ENCODE measurements at regions of chr3 and their contacts with region 1.

Region 1: GRCh38 chr3:108662130-108662738 is 72.7 kb downstream of the DZIP3 start:
- DNase-seq: peak; percentile 42 to 65 (median 46)
- ATAC-seq: peak; percentile 70; the same call in 2 of the 3 replicates
- H3K4me3 ChIP-seq: no peak overlapping the region
- H3K27ac ChIP-seq: no peak overlapping the region
- H3K4me1 ChIP-seq: no peaks in the 10 kb centered on the region
- H3K27me3 ChIP-seq: no peaks in the 10 kb centered on the region
- CTCF ChIP-seq: peak; percentile 38 to 71 (median 59); a peak in 5 of 6 replicates
- EP300 ChIP-seq: no peak
- POLR2A ChIP-seq: no peak
- RAD21 ChIP-seq: peak; percentile 78 to 82

Region 2: DNA sequence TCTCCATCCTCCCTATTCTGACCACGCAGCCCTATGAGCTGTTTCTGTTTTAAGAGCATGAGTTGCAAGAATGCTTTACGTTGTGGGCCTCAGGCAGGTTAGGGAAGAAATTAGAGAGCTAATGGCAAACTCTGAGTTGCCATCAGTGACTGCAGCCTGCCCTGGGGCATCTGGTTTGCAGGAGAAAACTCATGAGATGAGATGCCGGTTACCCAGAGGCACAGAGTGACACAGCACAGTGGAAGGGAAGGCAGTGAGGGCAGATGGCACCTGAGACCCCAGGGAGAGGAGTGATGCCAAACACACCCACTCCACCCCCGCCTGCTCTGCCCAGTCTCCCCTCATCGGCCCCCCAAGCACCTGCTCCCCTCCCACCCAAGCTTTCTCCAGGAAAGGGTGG is 836.6 kb before region 1 on chr3:
- CTCF ChIA-PET with region 1: no interaction called
- POLR2A ChIA-PET with region 1: no interaction called
- in situ Hi-C with region 1: no loop called
- intact Hi-C with region 1: no loop called
- DNase-seq: no peak
- ATAC-seq: no peak
- H3K4me3 ChIP-seq: no peak overlapping the region
- H3K27ac ChIP-seq: no peak overlapping the region
- H3K4me1 ChIP-seq: no peaks in the 10 kb centered on the region
- H3K27me3 ChIP-seq: peaks cover 0 to 4% of the 10 kb centered on the region in 2 experiments; a peak in 1 of 5 replicates
- CTCF ChIP-seq: no peak
- EP300 ChIP-seq: no peak
- POLR2A ChIP-seq: no peak
- RAD21 ChIP-seq: no peak

Region 3: GRCh38 chr3:108489771-108490170 is 172.5 kb before region 1 on chr3:
- CTCF ChIA-PET with region 1: no interaction called
- POLR2A ChIA-PET with region 1: no interaction called
- in situ Hi-C with region 1: no loop called
- intact Hi-C with region 1: loop called (anchors 2 kb)
- DNase-seq: peak; percentile 25 to 43 (median 33)
- ATAC-seq: peak; percentile 73
- H3K4me3 ChIP-seq: no peak overlapping the region
- H3K27ac ChIP-seq: no peak overlapping the region
- H3K4me1 ChIP-seq: no peaks in the 10 kb centered on the region; a peak in 1 of 5 replicates
- H3K27me3 ChIP-seq: peaks cover 0 to 7% of the 10 kb centered on the region in 2 experiments; a peak in 2 of 5 replicates
- CTCF ChIP-seq: peak; percentile 59 to 69 (median 62); a peak in 5 of 6 replicates
- EP300 ChIP-seq: no peak
- POLR2A ChIP-seq: no peak
- RAD21 ChIP-seq: peak; percentile 76 to 83

Region 4: DNA sequence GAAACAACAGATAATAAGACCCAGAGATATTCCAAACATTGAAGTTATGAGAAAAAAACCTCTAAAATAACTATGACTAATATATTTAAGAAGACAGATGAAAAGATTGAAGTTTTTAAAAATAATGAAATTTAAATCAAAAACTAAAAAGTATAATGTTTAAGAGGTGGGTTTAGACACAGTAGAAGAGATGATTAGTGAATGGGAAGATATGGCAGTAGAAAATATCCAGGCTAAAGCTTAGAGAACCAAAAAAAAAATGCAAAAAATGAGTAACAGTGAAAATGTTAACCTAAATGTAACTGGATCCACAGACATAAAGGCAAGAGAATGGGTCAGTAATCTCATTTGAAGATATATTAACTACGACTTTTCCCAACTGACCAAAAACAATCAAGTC is 42.8 kb after region 1 on chr3:
- CTCF ChIA-PET with region 1: no interaction called
- POLR2A ChIA-PET with region 1: no interaction called
- in situ Hi-C with region 1: no loop called
- intact Hi-C with region 1: no loop called
- DNase-seq: no peak
- ATAC-seq: no peak
- H3K4me3 ChIP-seq: no peak overlapping the region
- H3K27ac ChIP-seq: no peak overlapping the region
- H3K4me1 ChIP-seq: no peaks in the 10 kb centered on the region
- H3K27me3 ChIP-seq: no peaks in the 10 kb centered on the region
- CTCF ChIP-seq: no peak
- EP300 ChIP-seq: no peak
- POLR2A ChIP-seq: no peak
- RAD21 ChIP-seq: no peak

Region 5: DNA sequence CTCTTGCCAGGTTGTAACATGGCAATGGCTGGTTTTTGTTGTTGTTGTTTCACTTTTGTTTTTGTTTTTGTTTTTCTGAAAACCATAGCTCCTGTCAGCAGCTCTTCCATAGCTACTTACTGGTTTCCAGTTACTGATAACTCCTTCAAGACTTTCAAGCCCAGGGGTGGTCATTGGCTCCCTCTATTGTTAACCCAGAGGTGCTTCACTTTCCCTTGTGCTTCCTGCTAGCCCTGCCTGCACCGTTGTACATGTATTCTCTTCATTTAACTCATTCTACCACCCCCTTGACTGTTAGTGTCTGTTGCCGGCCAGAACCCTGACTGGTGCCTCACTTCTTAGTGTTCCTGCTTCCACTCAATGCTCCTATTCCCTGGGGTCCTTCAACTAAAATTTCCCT is 156.2 kb after region 1 on chr3:
- CTCF ChIA-PET with region 1: interaction called, 3 read pairs
- POLR2A ChIA-PET with region 1: no interaction called
- in situ Hi-C with region 1: no loop called
- intact Hi-C with region 1: loop called (anchors 1 kb)
- DNase-seq: peak in 3 of 4 experiments; percentile 2 to 33 (median 16)
- ATAC-seq: peak; percentile 84
- H3K4me3 ChIP-seq: no peak overlapping the region
- H3K27ac ChIP-seq: no peak overlapping the region
- H3K4me1 ChIP-seq: no peaks in the 10 kb centered on the region
- H3K27me3 ChIP-seq: no peaks in the 10 kb centered on the region
- CTCF ChIP-seq: peak; percentile 42 to 59 (median 50); a peak in 4 of 6 replicates
- EP300 ChIP-seq: no peak
- POLR2A ChIP-seq: no peak
- RAD21 ChIP-seq: peak; percentile 54 to 69

Region 6: DNA sequence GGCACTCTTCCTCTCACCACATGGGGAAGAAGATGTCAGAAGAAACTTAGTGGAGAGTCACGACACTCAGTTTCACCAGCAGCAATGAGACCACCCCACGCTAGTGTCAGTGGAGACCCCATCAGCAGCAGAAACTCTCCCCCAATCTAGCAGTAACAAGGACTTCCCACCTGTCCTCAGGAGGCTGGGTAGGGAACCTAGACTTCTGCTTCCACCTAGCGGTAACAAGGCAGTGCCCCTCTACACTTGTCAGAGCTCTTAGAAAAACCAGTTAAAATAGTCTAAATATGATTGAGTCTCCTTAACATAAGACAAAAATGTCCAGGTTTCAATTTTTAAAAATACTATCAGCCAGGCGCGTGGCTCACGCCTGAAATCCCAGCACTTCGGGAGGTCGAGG is 217.7 kb after region 1 on chr3:
- CTCF ChIA-PET with region 1: no interaction called
- POLR2A ChIA-PET with region 1: no interaction called
- in situ Hi-C with region 1: no loop called
- intact Hi-C with region 1: loop called (anchors 2 kb)
- DNase-seq: peak in 2 of 4 experiments; percentile 12 to 18
- ATAC-seq: peak; percentile 79
- H3K4me3 ChIP-seq: no peak overlapping the region
- H3K27ac ChIP-seq: no peak overlapping the region
- H3K4me1 ChIP-seq: no peaks in the 10 kb centered on the region
- H3K27me3 ChIP-seq: no peaks in the 10 kb centered on the region
- CTCF ChIP-seq: peak; percentile 27 to 39 (median 31); a peak in 2 of 6 replicates
- EP300 ChIP-seq: no peak
- POLR2A ChIP-seq: no peak
- RAD21 ChIP-seq: peak; percentile 32 to 54; a peak in 2 of 4 replicates

Region 7: GRCh38 chr3:108907194-108907593 is 245.0 kb after region 1 on chr3:
- CTCF ChIA-PET with region 1: no interaction called
- POLR2A ChIA-PET with region 1: no interaction called
- in situ Hi-C with region 1: loop called (anchors 10 kb)
- intact Hi-C with region 1: no loop called
- DNase-seq: no peak
- ATAC-seq: no peak
- H3K4me3 ChIP-seq: no peak overlapping the region
- H3K27ac ChIP-seq: no peak overlapping the region
- H3K4me1 ChIP-seq: no peaks in the 10 kb centered on the region
- H3K27me3 ChIP-seq: no peaks in the 10 kb centered on the region
- CTCF ChIP-seq: no peak
- EP300 ChIP-seq: no peak
- POLR2A ChIP-seq: no peak
- RAD21 ChIP-seq: no peak

Region 8: DNA sequence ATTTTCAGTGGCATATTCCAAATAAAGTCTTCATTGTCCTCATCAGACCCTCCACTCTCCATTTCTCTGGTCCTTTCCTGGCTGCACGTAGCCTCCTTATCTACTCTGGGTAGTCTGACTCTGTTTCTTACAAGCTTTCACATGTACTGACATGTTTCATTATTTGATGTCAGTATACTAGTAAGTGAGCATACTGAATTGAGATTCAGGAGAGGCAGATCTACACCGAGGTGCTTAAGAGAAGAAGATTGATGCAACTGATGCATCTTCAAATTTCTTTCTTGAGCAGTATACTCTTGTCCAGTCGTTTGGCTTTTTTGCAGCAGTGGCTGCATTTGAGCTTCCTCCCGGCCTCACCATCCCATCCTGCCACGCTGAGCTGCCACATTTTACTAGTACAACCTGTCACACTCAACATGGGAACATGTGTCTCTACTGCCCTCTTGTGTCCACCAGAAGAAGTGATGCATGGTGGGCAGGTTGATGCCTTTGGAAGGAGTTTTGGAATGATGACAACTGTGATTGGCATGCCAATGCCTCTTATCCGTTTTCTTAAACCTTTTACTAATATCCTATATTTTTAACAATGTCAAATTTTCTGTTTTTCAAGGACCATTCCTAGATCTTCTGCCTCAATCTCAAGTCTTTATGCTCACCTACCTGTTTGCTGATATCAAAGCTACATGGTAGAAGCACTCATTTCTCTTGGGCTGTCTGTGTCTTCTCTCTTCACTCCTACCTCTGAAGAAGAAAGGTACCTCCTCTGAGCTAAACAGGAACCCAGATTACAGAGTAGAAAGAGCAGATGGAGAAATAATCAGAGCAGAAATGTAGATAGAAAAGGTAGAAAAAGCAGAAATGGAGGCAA is 252.8 kb after region 1 on chr3:
- CTCF ChIA-PET with region 1: interaction called, 3 read pairs
- POLR2A ChIA-PET with region 1: no interaction called
- in situ Hi-C with region 1: no loop called
- intact Hi-C with region 1: loop called (anchors 1 kb)
- DNase-seq: peak; percentile 29 to 57 (median 54)
- ATAC-seq: peak; percentile 86
- H3K4me3 ChIP-seq: no peak overlapping the region
- H3K27ac ChIP-seq: no peak overlapping the region
- H3K4me1 ChIP-seq: no peaks in the 10 kb centered on the region
- H3K27me3 ChIP-seq: no peaks in the 10 kb centered on the region
- CTCF ChIP-seq: peak; percentile 57 to 71 (median 63)
- EP300 ChIP-seq: no peak
- POLR2A ChIP-seq: no peak
- RAD21 ChIP-seq: peak; percentile 65 to 73

Region 9: DNA sequence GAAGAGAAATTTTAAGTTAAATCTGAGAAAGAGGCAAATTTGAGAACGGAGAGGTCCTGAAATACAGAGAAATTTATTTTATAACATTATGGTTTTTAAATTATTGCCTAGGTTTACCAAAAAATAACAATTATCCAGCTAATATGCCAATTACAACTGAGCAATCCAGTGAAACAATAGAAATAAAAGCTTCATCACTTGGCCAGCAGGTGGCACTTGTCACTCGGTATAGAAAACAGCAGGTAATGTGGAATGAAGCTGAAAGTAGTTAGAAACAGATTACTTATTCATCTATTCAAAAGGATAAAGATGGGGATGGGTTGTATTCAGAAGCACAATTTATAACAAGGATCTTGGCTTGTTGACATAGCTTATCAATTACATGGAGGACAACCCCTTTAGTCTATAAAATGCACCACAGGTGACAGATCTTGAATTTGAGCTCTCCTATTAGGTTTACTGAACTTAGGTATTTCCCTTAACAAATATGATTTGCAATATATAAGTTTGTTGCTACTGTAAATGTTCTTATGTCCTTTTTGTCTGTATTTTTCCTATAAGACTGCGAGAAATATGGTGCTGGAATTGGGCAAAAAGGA is 361.5 kb after region 1 on chr3:
- CTCF ChIA-PET with region 1: no interaction called
- POLR2A ChIA-PET with region 1: no interaction called
- in situ Hi-C with region 1: no loop called
- intact Hi-C with region 1: loop called (anchors 10 kb)
- DNase-seq: peak; percentile 4 to 23 (median 12)
- ATAC-seq: peak; percentile 68; the same call in 2 of the 3 replicates
- H3K4me3 ChIP-seq: no peak overlapping the region
- H3K27ac ChIP-seq: no peak overlapping the region
- H3K4me1 ChIP-seq: no peaks in the 10 kb centered on the region
- H3K27me3 ChIP-seq: no peaks in the 10 kb centered on the region
- CTCF ChIP-seq: peak; percentile 39 to 65 (median 52); a peak in 4 of 6 replicates
- EP300 ChIP-seq: no peak
- POLR2A ChIP-seq: no peak
- RAD21 ChIP-seq: peak; percentile 62 to 68

Measured in K562 (cell line).